ENCODE measurements at regions of chr10 and their contacts with region 1.

Region 1: GRCh38 chr10:97407211-97407951 is 6.2 kb upstream of the RRP12 start:
- DNase-seq: peak; percentile 78
- ATAC-seq: peak; percentile 99
- H3K4me3 ChIP-seq: no peak overlapping the region
- H3K27ac ChIP-seq: no peak overlapping the region
- H3K4me1 ChIP-seq: no peaks in the 10 kb centered on the region
- H3K27me3 ChIP-seq: no peaks in the 10 kb centered on the region
- CTCF ChIP-seq: peak; percentile 69
- POLR2A ChIP-seq: no peak
- RAD21 ChIP-seq: peak; percentile 53

Region 2: DNA sequence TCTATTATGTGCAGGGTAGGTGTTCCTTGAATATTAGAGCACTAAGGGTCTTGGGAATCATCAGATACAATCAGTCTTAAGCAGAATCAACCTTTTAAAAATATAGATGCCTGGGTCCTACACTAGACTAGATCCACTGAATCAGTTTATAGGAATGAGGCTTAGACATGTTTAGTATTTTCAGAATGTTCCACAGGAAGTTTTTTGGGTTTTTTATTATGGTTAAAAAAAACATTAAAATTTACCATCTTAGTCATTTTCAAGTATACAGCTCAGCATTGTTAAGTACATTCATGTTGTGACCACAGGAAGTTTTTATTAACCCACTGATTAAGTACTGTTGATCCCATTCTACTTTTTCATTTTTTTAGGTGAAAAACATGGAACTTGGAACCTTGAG is 439.5 kb before region 1 on chr10:
- CTCF ChIA-PET with region 1: no interaction called
- POLR2A ChIA-PET with region 1: no interaction called
- dilution Hi-C with region 1: no loop called
- in situ Hi-C with region 1: no loop called
- intact Hi-C with region 1: no loop called
- DNase-seq: peak; percentile 54
- ATAC-seq: peak; percentile 83
- H3K4me3 ChIP-seq: no peak overlapping the region
- H3K27ac ChIP-seq: no peak overlapping the region
- H3K4me1 ChIP-seq: peaks cover 7% of the 10 kb centered on the region
- H3K27me3 ChIP-seq: no peaks in the 10 kb centered on the region
- CTCF ChIP-seq: no peak
- POLR2A ChIP-seq: no peak
- RAD21 ChIP-seq: no peak

Region 3: GRCh38 chr10:97425964-97426775 is 18.8 kb after region 1 on chr10 and contains the start of gene PGAM1:
- CTCF ChIA-PET with region 1: interaction called, 3 read pairs
- POLR2A ChIA-PET with region 1: no interaction called
- dilution Hi-C with region 1: no loop called
- in situ Hi-C with region 1: no loop called
- intact Hi-C with region 1: loop called (anchors 1 kb)
- DNase-seq: peak; percentile 95
- ATAC-seq: peak; percentile 86
- H3K4me3 ChIP-seq: peak within 1 kb of the TSS; percentile 97
- H3K27ac ChIP-seq: peak within 1 kb of the TSS; percentile 96
- H3K4me1 ChIP-seq: peaks cover 12% of the 10 kb centered on the region
- H3K27me3 ChIP-seq: no peaks in the 10 kb centered on the region
- CTCF ChIP-seq: peak; percentile 90
- POLR2A ChIP-seq: peak; percentile 51; the same call in 1 of the 2 replicates
- RAD21 ChIP-seq: no peak; the same call in 1 of the 2 replicates
- total RNA-seq, gene PGAM1: 716 and 841 TPM in 2 replicates

Region 4: DNA sequence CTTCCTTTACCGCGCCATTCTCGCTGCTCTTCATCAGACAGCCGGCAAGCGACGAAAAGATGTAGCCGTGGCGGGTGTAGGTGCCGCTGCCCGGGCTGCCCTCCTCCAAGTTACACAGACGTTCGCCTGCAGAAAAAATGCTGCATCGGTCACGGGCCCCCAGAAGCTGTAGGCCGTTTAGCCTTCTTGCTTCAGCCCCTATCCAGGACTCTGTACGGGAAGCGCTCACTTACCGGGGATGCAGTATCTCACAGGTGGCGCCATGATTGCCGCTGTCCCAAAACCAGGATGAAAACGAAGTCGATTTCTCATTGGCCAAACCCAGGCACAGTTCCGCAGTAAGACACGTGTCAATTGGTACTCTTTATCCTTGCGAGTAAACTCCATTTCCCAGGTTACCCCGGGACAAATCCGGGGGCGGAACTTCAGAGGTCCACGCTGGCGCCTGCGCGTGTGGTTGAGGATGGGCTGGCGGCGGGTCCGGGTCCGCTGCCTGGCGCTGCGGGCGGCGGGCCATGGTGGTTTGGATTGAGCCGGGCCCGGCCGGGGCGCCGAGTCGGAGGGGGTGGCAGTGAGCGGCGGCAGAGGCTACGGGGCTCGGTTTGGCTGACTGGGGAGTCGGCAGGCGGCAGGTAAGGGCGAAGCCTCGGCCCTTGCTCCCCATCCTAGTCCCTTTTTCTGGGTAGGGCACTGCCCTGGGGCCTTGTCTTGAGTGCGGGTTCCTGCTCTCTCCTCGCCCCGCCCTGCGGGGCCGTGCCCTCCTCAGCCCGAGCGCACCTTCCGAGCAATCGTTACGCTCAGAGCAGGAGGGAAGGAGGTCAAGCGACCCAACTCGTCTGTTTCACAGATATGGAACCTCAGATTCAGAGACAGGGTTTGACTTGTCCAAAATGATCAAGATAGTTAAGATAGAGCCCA is 38.6 kb after region 1 on chr10 and contains the starts of genes EXOSC1 and ZDHHC16:
- CTCF ChIA-PET with region 1: no interaction called
- POLR2A ChIA-PET with region 1: no interaction called
- dilution Hi-C with region 1: no loop called
- in situ Hi-C with region 1: no loop called
- intact Hi-C with region 1: loop called (anchors 2 kb)
- DNase-seq: peak; percentile 97
- ATAC-seq: peak; percentile 96
- H3K4me3 ChIP-seq: peak within 1 kb of the TSS; percentile 84
- H3K27ac ChIP-seq: peak within 1 kb of the TSS; percentile 72
- H3K4me1 ChIP-seq: peaks cover 5% of the 10 kb centered on the region; the same call in 1 of the 2 replicates
- H3K27me3 ChIP-seq: no peaks in the 10 kb centered on the region
- CTCF ChIP-seq: peak; percentile 20; the same call in 1 of the 2 replicates
- POLR2A ChIP-seq: peak; percentile 74
- RAD21 ChIP-seq: peak; percentile 13; the same call in 1 of the 2 replicates
- total RNA-seq, gene EXOSC1: 47.2 and 51.6 TPM in 2 replicates
- total RNA-seq, gene ZDHHC16: 51.7 and 64.0 TPM in 2 replicates

Region 5: GRCh38 chr10:97553575-97554031 is 146.2 kb after region 1 on chr10:
- CTCF ChIA-PET with region 1: no interaction called
- POLR2A ChIA-PET with region 1: no interaction called
- dilution Hi-C with region 1: no loop called
- in situ Hi-C with region 1: no loop called
- intact Hi-C with region 1: loop called (anchors 5 kb)
- DNase-seq: peak; percentile 70
- ATAC-seq: peak; percentile 96
- H3K4me3 ChIP-seq: no peak overlapping the region
- H3K27ac ChIP-seq: peak overlapping the region; percentile 7; the same call in 1 of the 2 replicates
- H3K4me1 ChIP-seq: peaks cover 16% of the 10 kb centered on the region
- H3K27me3 ChIP-seq: no peaks in the 10 kb centered on the region
- CTCF ChIP-seq: peak; percentile 91
- POLR2A ChIP-seq: 0 out of 2 replicates have a peak, but pooled peaks have one; percentile 27
- RAD21 ChIP-seq: peak; percentile 96

Region 6: DNA sequence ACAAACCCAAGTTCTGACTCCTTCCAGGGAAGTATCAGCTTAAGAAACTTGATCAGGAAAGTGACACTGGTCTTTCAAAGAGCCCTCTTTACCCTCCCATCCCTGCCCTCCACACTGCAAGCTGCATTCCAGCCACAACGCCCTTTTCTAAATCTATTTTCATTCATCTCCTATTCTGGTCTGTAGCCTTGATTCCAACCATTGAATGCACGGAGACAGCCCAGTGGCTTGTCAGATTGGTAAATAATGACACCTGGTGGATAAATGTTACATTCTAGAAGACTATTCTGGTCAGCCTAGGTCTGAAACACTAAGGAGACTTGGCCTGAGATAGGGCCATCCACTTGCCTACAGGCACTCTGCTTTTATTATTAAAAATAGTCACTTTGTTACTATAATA is 205.0 kb after region 1 on chr10:
- CTCF ChIA-PET with region 1: no interaction called
- POLR2A ChIA-PET with region 1: no interaction called
- dilution Hi-C with region 1: no loop called
- in situ Hi-C with region 1: no loop called
- intact Hi-C with region 1: loop called (anchors 5 kb)
- DNase-seq: peak; percentile 55
- ATAC-seq: peak; percentile 80
- H3K4me3 ChIP-seq: no peak overlapping the region
- H3K27ac ChIP-seq: no peak overlapping the region
- H3K4me1 ChIP-seq: no peaks in the 10 kb centered on the region
- H3K27me3 ChIP-seq: no peaks in the 10 kb centered on the region
- CTCF ChIP-seq: peak; percentile 58
- POLR2A ChIP-seq: no peak
- RAD21 ChIP-seq: peak; percentile 75

Measured in IMR-90 (cell line).